ENCODE measurements at regions of chr17 and their contacts with region 1.

Region 1: DNA sequence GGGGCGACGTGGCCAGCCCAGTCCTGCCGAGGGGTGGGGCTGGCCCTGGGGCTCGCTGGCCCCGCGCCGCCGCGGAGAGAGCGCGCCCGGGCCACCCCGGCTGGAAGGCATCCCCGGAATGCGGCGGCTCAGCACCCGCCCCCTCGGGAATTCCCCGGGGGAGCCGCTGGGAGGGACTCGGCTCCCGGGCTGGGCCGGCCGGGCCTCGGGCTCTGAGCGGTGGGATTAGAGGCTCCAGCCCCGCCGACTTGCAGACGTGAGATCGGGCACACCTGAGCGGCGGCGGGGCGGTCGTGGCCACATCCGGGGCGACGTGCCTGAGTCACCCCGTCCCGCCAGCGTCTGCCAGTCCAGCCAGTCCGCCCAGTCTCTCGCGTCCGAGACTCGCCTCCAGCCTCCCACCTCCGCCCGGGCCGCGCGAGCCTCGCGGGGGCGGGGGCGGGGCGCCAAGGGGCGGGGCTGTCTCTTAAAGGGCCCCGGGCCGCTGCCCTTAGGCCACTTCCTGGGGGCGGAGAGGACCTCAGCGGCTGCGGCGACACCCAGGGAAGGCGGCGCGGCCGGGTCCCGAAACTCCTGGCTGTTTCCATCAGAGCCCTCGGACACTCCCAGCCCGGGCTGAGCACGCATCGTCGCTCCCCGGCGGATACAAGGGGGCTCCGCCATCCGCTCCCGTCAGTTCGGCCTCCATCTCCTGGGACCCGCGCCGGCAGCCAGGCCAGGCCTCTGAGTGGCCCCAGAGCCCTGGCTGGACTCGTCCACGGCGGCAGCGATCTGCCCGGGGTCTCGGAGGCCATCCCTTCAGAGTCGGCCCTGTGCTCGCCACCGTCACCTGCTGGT is at the start of gene KCTD11:
- DNase-seq: peak; percentile 46 to 89
- H3K4me3 ChIP-seq: peak within 1 kb of the TSS; percentile 39 to 96 (median 84)
- H3K27ac ChIP-seq: peak within 1 kb of the TSS; percentile 66; the same call in 1 of the 2 replicates
- H3K4me1 ChIP-seq: peaks cover 0 to 19% (median 10%) of the 10 kb centered on the region in 4 experiments; a peak in 6 of 7 replicates
- H3K27me3 ChIP-seq: no peaks in the 10 kb centered on the region
- CTCF ChIP-seq: peak in 2 of 3 experiments; percentile 70 to 73; a peak in 2 of 4 replicates
- EP300 ChIP-seq: peak in 1 of 2 experiments; percentile 80; a peak in 2 of 3 replicates
- POLR2A ChIP-seq: peak in 1 of 2 experiments; percentile 82; a peak in 2 of 3 replicates
- RAD21 ChIP-seq: peak; percentile 24 to 48; a peak in 3 of 4 replicates
- total RNA-seq, gene KCTD11: 8.7 and 9.2 TPM in 2 replicates

Region 2: DNA sequence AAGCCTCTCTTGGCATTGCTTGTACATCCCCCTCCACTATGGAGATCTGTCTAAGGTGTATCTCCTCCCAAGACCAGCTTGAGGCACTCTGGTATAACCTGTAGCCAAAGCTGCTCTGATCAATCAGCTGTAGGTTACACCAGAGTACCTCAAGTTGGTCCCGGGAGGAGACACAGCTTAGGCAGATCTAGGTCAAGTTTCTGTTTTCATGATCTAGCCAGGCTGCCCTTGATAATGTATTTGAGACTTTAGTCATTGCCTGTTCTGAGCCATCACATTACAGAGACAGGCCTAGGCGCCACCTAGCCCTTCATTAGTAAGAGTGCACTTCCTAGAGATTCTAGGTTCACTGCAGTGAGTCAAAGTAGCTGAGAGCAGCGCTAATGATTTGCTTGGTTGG is 204.1 kb before region 1 on chr17:
- CTCF ChIA-PET with region 1: no interaction called
- POLR2A ChIA-PET with region 1: no interaction called
- DNase-seq: no peak
- H3K4me3 ChIP-seq: no peak overlapping the region
- H3K27ac ChIP-seq: no peak overlapping the region; the same call in 1 of the 2 replicates
- H3K4me1 ChIP-seq: peaks cover 0 to 5% (median 0%) of the 10 kb centered on the region in 4 experiments; a peak in 3 of 7 replicates
- H3K27me3 ChIP-seq: no peaks in the 10 kb centered on the region
- CTCF ChIP-seq: peak in 1 of 3 experiments; percentile 20; a peak in 1 of 4 replicates
- EP300 ChIP-seq: no peak
- POLR2A ChIP-seq: no peak
- RAD21 ChIP-seq: peak in 1 of 2 experiments; percentile 7; a peak in 1 of 4 replicates

Region 3: DNA sequence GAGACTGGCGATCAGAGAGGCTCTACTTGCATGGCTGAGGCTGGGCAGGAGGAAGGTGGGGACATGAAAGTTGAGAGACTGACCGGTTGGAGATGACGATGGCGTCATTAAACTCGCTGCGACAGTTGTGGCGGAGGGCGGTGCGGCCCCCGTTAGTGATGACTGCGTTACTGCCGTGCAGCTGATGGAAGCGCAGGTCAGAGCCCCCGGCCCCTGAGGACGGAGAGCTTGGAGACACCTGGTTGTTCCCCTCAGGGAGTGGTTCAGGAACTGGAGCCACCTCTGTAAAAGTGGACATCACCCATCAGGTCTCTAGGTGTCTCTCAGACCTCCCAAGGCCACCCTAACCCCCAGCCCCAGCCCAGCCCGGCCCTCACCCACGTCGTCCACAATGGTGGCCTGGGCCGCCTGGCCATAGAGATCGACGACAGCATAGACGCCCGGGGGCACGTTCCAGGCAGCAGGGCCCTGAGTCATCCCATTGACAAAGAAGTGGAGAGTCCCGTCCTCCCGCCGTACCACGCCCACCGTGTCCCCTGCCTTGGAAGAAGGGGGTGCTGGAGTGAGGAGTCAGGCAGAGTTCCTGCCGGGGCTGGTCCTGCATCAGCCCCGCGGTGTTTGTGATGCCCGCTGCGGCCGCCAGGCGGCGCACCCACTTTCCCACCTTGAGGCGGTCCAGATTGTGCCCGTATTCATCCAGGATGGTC is 28.0 kb before region 1 on chr17:
- CTCF ChIA-PET with region 1: interaction called, 167 read pairs
- POLR2A ChIA-PET with region 1: interaction called, 13 read pairs
- DNase-seq: peak; percentile 47 to 99
- H3K4me3 ChIP-seq: no peak overlapping the region
- H3K27ac ChIP-seq: no peak overlapping the region
- H3K4me1 ChIP-seq: peaks cover 0 to 10% (median under 1%) of the 10 kb centered on the region in 4 experiments; a peak in 2 of 7 replicates
- H3K27me3 ChIP-seq: no peaks in the 10 kb centered on the region; a peak in 1 of 7 replicates
- CTCF ChIP-seq: peak; percentile 93 to 97 (median 94)
- EP300 ChIP-seq: peak in 1 of 2 experiments; percentile 28; a peak in 1 of 3 replicates
- POLR2A ChIP-seq: no peak
- RAD21 ChIP-seq: peak; percentile 74 to 84

Region 4: GRCh38 chr17:7336240-7337175 is 15.4 kb before region 1 on chr17 and contains the start of gene ACAP1:
- CTCF ChIA-PET with region 1: interaction called, 167 read pairs
- POLR2A ChIA-PET with region 1: interaction called, 78 read pairs
- DNase-seq: peak; percentile 44 to 79
- H3K4me3 ChIP-seq: peak within 1 kb of the TSS in 3 of 4 experiments; percentile 10 to 52 (median 32); a peak in 6 of 8 replicates
- H3K27ac ChIP-seq: peak within 1 kb of the TSS; percentile 51; the same call in 1 of the 2 replicates
- H3K4me1 ChIP-seq: peaks cover 3 to 16% (median 14%) of the 10 kb centered on the region in 4 experiments
- H3K27me3 ChIP-seq: no peaks in the 10 kb centered on the region
- CTCF ChIP-seq: no peak
- EP300 ChIP-seq: peak in 1 of 2 experiments; percentile 52; a peak in 1 of 3 replicates
- POLR2A ChIP-seq: peak in 1 of 2 experiments; percentile 32; a peak in 2 of 3 replicates
- RAD21 ChIP-seq: peak in 1 of 2 experiments; percentile 16; a peak in 1 of 4 replicates
- total RNA-seq, gene ACAP1: 45.1 and 49.2 TPM in 2 replicates

Region 5: DNA sequence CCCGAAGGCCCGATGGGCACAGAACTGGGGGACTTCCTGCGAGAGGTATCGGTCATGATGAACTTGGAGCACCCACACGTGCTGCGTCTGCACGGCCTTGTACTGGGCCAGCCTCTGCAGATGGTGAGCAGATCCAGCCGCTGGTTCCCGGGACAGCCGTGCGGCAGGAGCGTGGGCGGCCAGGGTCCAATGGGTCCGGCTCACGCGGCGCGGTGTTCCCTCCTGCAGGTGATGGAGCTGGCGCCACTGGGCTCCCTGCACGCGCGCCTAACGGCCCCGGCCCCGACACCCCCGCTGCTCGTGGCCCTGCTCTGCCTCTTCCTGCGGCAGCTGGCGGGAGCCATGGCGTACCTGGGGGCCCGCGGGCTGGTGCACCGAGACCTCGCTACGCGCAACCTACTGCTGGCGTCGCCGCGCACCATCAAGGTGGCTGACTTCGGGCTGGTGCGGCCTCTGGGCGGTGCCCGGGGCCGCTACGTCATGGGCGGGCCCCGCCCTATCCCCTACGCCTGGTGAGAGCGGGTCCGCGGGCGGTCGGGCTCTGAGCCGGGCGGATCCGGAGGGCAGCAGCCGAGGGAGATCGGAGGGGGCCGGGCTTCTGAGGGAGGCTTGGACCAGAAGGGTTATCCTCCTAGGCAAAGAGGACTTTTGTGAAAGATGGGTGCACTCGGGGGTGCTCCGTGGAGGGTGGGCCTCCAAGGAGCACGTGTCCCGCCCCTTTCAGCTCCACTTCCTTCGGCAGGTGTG is 32.0 kb after region 1 on chr17:
- CTCF ChIA-PET with region 1: interaction called, 21 read pairs
- POLR2A ChIA-PET with region 1: interaction called, 6 read pairs
- DNase-seq: peak in 1 of 2 experiments; percentile 92
- H3K4me3 ChIP-seq: peak overlapping the region; percentile 36 to 60 (median 46)
- H3K27ac ChIP-seq: no peak overlapping the region
- H3K4me1 ChIP-seq: peaks cover 0 to 17% (median 10%) of the 10 kb centered on the region in 4 experiments; a peak in 6 of 7 replicates
- H3K27me3 ChIP-seq: peaks cover 0 to 39% (median 29%) of the 10 kb centered on the region in 4 experiments; a peak in 6 of 7 replicates
- CTCF ChIP-seq: no peak
- EP300 ChIP-seq: no peak
- POLR2A ChIP-seq: peak in 1 of 2 experiments; percentile 28; a peak in 1 of 3 replicates
- RAD21 ChIP-seq: no peak

Region 6: DNA sequence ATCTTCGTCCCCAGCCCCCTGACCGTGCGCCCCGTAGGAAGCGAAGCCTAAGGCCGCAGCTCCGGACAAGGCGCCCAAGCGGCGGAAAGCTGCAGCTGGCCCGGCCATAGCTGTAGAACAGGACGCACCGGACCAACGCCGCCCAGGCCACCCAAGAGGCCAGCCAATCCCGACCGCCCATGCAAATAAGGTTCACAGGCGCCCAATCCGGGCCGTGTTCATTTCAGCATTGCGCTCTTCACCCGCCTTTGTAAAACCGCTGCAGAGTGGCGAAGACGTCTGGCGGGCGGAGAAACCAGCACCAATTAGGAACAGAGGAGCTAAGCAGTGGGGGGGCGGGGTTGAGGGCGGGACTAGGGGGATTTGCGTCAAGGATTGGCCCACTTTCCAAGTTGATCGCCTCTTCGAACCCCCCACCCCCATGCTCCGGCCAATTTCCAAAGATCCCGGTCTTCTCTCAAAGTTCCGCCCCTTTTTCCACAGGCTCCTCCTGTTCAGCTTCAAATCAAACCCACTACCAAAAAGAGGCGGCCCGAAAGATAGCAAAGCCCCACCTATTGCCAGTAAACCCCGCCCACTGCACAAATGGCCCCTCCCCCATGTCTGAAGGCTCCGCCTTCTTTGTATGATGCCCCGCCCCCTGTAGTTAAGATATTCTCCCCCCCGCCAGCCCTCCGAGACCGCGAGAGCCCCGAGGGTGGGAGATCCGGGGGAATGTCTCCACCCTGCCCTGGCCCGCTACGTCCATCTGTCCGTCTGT is 52.3 kb after region 1 on chr17 and contains the start of gene TMEM256:
- CTCF ChIA-PET with region 1: interaction called, 22 read pairs
- POLR2A ChIA-PET with region 1: interaction called, 10 read pairs
- DNase-seq: peak; percentile 96 to 99
- H3K4me3 ChIP-seq: peak within 1 kb of the TSS; percentile 72 to 94 (median 81)
- H3K27ac ChIP-seq: peak within 1 kb of the TSS; percentile 81; the same call in 1 of the 2 replicates
- H3K4me1 ChIP-seq: peaks cover 0 to 15% (median 11%) of the 10 kb centered on the region in 4 experiments; a peak in 5 of 7 replicates
- H3K27me3 ChIP-seq: no peaks in the 10 kb centered on the region; a peak in 1 of 7 replicates
- CTCF ChIP-seq: no peak
- EP300 ChIP-seq: no peak
- POLR2A ChIP-seq: peak in 1 of 2 experiments; percentile 74; a peak in 2 of 3 replicates
- RAD21 ChIP-seq: no peak
- total RNA-seq, gene TMEM256: 97.0 and 104 TPM in 2 replicates

Region 7: DNA sequence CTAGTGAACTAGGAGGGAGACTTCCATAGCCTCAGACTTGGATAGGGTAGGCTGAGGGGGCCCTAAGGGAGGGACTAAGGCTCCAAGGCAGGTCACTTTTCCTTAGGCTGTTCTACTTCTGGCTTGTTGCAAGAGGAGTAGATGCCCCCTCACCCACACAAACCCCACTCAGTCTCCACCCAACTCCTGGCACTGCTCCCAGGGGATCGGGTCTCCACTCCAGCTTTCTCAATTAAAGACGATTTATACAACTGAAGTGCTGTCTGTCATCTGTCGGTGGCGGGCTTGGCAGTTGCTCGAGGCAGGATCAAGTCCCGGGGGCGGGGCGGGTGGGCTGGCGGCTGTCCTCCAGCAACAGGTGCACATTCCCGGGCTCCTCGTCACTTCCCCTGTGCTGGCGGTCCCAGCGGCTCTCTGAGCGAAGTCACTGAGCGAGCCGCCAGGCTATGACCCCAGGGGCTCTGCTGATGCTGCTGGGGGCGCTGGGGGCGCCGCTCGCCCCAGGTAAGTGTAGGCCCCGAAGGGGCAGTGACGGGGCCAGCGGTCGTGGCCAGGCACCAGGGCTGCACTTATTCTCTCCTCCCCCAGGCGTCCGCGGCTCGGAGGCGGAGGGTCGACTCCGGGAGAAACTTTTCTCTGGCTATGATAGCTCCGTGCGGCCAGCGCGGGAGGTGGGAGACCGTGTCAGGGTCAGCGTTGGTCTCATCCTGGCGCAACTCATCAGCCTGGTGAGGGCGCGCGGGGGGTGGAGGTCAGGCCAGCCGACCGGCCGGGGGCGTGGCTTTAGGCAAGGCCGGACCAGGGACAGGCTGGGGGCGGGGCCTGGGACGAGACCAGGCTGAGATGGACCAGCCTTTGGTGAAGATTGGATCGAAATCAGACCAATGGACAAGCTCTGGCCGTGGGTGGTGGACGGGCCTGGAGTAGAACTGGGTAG is 93.1 kb after region 1 on chr17 and contains the start of gene CHRNB1:
- CTCF ChIA-PET with region 1: interaction called, 16 read pairs
- POLR2A ChIA-PET with region 1: interaction called, 15 read pairs
- DNase-seq: peak in 1 of 2 experiments; percentile 94
- H3K4me3 ChIP-seq: peak within 1 kb of the TSS; percentile 39 to 73 (median 66)
- H3K27ac ChIP-seq: peak within 1 kb of the TSS; percentile 47; the same call in 1 of the 2 replicates
- H3K4me1 ChIP-seq: peaks cover 3 to 17% (median 13%) of the 10 kb centered on the region in 4 experiments
- H3K27me3 ChIP-seq: peaks cover 0 to 8% (median 6%) of the 10 kb centered on the region in 4 experiments; a peak in 6 of 7 replicates
- CTCF ChIP-seq: no peak
- EP300 ChIP-seq: no peak
- POLR2A ChIP-seq: no peak
- RAD21 ChIP-seq: no peak
- total RNA-seq, gene CHRNB1: 13.8 and 14.1 TPM in 2 replicates